HepG2 (cell line): ENCODE measurements at regions of chr9 and their contacts with region 1.

Region 1: GRCh38 chr9:4515958-4516375 is 25.7 kb downstream of the SLC1A1 start:
- DNase-seq: no peak
- ATAC-seq: no peak
- H3K4me3 ChIP-seq: no peak overlapping the region
- H3K27ac ChIP-seq: no peak overlapping the region
- H3K4me1 ChIP-seq: no peaks in the 10 kb centered on the region
- H3K27me3 ChIP-seq: no peaks in the 10 kb centered on the region
- CTCF ChIP-seq: no peak
- EP300 ChIP-seq: no peak
- POLR2A ChIP-seq: no peak
- RAD21 ChIP-seq: no peak

Region 2: GRCh38 chr9:4574657-4575243 is 58.8 kb after region 1 on chr9:
- CTCF ChIA-PET with region 1: no interaction called
- POLR2A ChIA-PET with region 1: no interaction called
- in situ Hi-C with region 1: no loop called
- intact Hi-C with region 1: loop called (anchors 10 kb)
- DNase-seq: no peak
- ATAC-seq: no peak
- H3K4me3 ChIP-seq: no peak overlapping the region
- H3K27ac ChIP-seq: no peak overlapping the region
- H3K4me1 ChIP-seq: no peaks in the 10 kb centered on the region
- H3K27me3 ChIP-seq: peaks cover 0 to 1% of the 10 kb centered on the region in 2 experiments; a peak in 1 of 5 replicates
- CTCF ChIP-seq: no peak
- EP300 ChIP-seq: no peak
- POLR2A ChIP-seq: no peak
- RAD21 ChIP-seq: no peak